Dorsolateral prefrontal cortex (tissue), 120 donors: ENCODE measurements at regions of chr1 and their contacts with region 1.

Region 1: DNA sequence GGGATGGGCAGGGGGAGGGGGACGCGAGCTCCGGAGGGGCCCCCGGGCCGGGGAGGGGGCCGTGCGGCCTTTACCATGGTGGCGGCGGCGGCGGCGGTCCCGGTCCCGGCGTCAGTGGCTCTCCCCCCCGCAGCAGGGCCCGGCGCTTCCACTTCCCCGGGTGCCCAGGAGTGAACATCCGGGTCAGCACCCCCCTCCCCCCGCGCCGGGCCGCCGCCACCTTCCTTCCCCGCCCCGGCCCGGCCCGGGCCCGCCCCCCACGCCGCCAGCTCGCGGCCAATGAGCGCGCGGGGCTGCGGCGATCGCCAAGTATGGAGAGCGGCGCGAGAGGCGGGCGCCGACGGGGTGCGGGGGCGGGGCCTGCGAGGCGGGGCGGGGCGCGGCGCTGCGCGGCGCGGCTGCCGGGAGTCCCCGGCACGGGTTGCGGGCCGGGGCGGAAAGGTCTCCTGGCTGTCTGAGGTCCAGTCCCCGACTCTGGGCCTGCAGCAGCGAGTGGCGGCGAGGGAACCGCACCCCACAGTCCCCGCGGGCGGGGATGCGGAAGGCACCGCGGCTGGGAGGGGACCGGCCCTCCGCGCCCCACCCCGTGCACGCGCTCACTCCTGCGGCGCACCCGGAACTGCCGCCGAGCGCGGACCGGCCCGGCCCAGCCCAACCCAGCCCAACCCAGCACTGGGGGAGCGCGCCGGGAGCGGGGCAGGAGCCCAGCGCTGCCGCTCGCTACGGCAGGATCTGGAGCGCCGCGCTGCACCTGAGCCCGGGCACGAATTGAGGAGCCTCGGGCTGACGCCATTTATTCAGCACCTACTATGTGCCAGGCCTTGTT is at the start of gene CAPZB:
- DNase-seq: peak; percentile 81 to 96 (median 91)
- H3K4me3 ChIP-seq: peak within 1 kb of the TSS; percentile 80 to 100 (median 97)
- H3K27ac ChIP-seq: peak within 1 kb of the TSS; percentile 84 to 99 (median 95)
- H3K27me3 ChIP-seq: no peaks in the 10 kb centered on the region
- CTCF ChIP-seq: peak in 3 of 56 donors; percentile 9 to 11 (median 11)
- total RNA-seq, gene CAPZB: 118 to 250 (median 198) TPM

Region 2: GRCh38 chr1:19311959-19312781 is 173.4 kb before region 1 on chr1 and contains the starts of genes AKR7A2 and SLC66A1:
- intact Hi-C with region 1: loop called in 1 of 2 experiments (anchors 5 kb)
- DNase-seq: peak; percentile 78 to 97 (median 90)
- H3K4me3 ChIP-seq: peak within 1 kb of the TSS; percentile 61 to 99 (median 93)
- H3K27ac ChIP-seq: peak within 1 kb of the TSS; percentile 26 to 96 (median 90)
- H3K27me3 ChIP-seq: no peaks in the 10 kb centered on the region
- CTCF ChIP-seq: peak in 40 of 56 donors; percentile 12 to 65 (median 39)
- total RNA-seq, gene AKR7A2: 30.7 to 80.6 (median 48.3) TPM
- total RNA-seq, gene SLC66A1: 12.9 to 28.8 (median 19.2) TPM

Region 3: DNA sequence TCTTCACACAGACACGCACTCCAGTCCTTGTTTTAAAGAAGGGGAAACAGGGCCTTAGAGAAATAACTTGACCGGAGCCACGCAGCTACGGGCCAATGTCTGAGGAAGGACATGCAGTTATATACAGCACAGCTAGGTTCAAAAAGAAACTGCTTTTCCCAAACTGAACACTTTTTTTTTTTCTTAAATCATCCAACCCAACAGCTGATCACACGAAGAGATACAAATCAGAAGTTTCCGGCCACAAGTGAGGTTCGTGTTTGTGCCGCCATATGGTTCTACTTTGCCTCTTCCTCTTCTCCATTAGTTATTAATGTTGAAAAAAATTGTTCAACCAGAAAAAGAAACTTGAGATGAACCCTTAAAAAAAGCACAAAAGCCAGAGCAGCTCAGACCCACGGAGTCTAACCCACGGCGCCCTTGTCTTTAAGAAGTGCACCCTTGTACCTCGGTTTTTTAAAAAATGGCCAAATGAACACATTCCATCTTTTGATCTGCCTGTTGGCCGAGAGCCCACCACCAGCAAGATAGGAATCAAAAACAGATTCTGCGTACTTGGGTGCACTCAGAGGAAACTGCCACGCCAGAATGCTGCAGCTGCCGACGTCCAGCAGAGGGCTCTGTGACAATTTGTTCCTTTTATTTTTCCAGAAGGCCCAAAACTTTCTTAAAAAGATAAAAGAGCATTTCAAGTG is 94.5 kb before region 1 on chr1:
- intact Hi-C with region 1: loop called in 1 of 2 experiments (anchors 2 kb)
- DNase-seq: peak in 3 of 10 donors; percentile 40 to 60 (median 57)
- H3K4me3 ChIP-seq: peak overlapping the region in 10 of 59 donors; percentile 3 to 34 (median 9)
- H3K27ac ChIP-seq: peak overlapping the region in 57 of 59 donors; percentile 24 to 86 (median 68)
- H3K27me3 ChIP-seq: no peaks in the 10 kb centered on the region
- CTCF ChIP-seq: peak; percentile 57 to 94 (median 84)

Region 4: GRCh38 chr1:19439464-19440171 is 46.0 kb before region 1 on chr1:
- intact Hi-C with region 1: loop called in 1 of 2 experiments (anchors 10 kb)
- DNase-seq: peak in 5 of 10 donors; percentile 42 to 65 (median 58)
- H3K4me3 ChIP-seq: peak overlapping the region in 5 of 59 donors; percentile 1 to 23 (median 12)
- H3K27ac ChIP-seq: peak overlapping the region in 56 of 59 donors; percentile 9 to 90 (median 74)
- H3K27me3 ChIP-seq: no peaks in the 10 kb centered on the region
- CTCF ChIP-seq: peak in 26 of 56 donors; percentile 11 to 55 (median 24)

Region 5: DNA sequence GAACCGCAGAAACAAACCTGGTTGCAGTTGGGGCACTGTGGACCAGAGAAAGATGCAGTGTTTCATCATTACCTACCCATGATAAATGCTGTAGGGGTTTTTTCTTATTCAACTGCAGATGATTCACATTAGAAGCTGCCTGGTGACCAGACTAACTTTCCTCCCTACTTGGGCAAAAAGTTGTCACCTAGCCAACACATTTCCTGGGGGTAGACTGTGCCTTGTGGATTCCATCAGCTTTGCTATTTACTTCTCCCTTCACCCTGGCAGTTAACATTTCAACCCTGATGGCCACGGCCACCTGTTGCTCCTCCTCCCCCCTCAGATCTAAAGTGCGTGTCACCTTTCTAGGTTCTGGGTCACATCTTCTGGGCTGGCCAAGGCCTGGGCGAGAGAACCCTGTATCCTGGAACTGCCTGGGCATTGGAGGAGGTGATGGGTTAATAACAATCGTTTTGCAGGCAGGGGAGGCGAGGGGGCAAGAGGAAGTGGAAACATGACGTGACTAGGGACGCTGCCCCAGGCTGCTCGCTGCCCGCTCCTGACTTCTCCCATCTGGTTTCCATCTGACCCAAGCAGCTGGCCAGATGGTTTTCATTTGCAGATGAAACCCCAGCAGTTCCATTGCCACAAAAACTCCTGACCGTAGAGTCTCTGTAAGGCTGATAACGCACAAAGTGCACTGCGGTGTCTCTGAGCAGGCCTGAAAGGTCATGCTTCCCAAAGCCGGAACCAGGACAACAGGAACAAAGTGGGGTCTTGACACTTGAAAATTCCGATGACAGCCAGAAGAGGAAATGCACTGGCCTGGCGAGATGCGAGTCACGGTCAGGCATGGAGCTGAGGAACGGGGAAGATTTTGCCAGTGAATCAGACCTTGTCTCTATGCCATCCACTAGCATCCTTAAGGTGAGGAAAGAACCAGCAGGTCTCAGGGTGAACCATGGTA is 36.8 kb before region 1 on chr1:
- intact Hi-C with region 1: loop called in 1 of 2 experiments (anchors 5 kb)
- DNase-seq: no peak
- H3K4me3 ChIP-seq: peak overlapping the region in 13 of 59 donors; percentile 2 to 43 (median 14)
- H3K27ac ChIP-seq: peak overlapping the region in 57 of 59 donors; percentile 10 to 90 (median 69)
- H3K27me3 ChIP-seq: no peaks in the 10 kb centered on the region
- CTCF ChIP-seq: no peak

Region 6: GRCh38 chr1:19596714-19597495 is 111.3 kb after region 1 on chr1:
- intact Hi-C with region 1: loop called (anchors 2 to 5 kb)
- DNase-seq: peak; percentile 87 to 98 (median 96)
- H3K4me3 ChIP-seq: peak overlapping the region; percentile 73 to 100 (median 95)
- H3K27ac ChIP-seq: peak overlapping the region in 58 of 59 donors; percentile 60 to 97 (median 87)
- H3K27me3 ChIP-seq: no peaks in the 10 kb centered on the region
- CTCF ChIP-seq: peak in 12 of 56 donors; percentile 7 to 36 (median 22)

Region 7: DNA sequence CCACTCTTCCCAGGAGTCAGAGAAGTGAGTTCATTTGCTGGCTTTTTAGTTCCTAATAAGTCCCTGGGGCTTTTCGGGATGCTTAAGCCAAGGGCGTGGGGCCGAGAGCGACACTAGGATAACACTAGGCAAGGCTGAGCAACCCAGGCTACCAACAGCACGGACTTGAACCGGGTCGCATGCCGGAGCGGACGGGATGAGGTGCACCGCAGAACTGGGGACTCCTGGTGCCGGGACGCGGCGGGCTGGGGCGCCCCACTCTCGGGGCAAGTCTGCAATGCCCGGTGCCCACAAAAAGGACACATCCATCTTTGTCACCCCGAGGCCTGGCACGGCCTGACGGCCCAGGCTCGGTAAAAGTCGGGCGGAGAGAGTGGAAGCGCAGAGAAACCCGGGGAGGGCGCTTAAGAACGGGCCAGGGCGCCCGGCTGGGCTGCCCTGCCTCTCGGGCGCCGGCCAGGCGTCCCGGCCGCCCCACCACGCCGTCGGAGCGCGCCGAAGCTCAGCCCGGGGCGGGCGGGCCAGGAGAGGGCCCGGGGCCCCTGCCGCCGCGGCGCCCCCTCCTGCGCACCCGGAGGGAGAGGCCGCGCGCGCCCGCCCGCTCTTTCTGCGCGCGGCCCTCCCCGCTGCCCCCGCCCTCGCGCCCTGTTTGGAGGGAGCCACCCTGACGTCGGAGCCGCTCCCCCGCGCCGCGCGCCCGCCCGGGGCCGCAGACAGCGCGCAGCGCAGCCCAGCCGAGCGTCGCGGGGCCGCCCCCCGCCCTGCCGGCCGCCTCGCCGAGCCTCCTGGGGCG is 158.2 kb after region 1 on chr1 and contains the start of gene NBL1:
- intact Hi-C with region 1: loop called (anchors 2 to 5 kb)
- DNase-seq: peak in 4 of 10 donors; percentile 46 to 69 (median 58)
- H3K4me3 ChIP-seq: peak within 1 kb of the TSS; percentile 40 to 88 (median 71)
- H3K27ac ChIP-seq: peak within 1 kb of the TSS in 53 of 59 donors; percentile 29 to 92 (median 78)
- H3K27me3 ChIP-seq: peaks cover 0 to 12% (median 0%) of the 10 kb centered on the region in 45 donors
- CTCF ChIP-seq: no peak
- total RNA-seq, gene NBL1: 50.1 to 208 (median 129) TPM